ENCODE measurements at regions of chr7 and their contacts with region 1.

Region 1: GRCh38 chr7:17769918-17770317 is 170.4 kb downstream of the SNX13 start:
- DNase-seq: peak; percentile 23
- H3K4me3 Mint-ChIP-seq: no peak overlapping the region
- H3K27ac Mint-ChIP-seq: no peak overlapping the region
- H3K4me1 Mint-ChIP-seq: peaks cover 7% of the 10 kb centered on the region
- H3K27me3 Mint-ChIP-seq: peaks cover 4% of the 10 kb centered on the region

Region 2: GRCh38 chr7:17991866-17992648 is 222.1 kb after region 1 on chr7:
- intact Hi-C with region 1: loop called (anchors 1 kb)
- DNase-seq: no peak
- H3K4me3 Mint-ChIP-seq: no peak overlapping the region
- H3K27ac Mint-ChIP-seq: no peak overlapping the region
- H3K4me1 Mint-ChIP-seq: no peaks in the 10 kb centered on the region
- H3K27me3 Mint-ChIP-seq: peaks cover 3% of the 10 kb centered on the region

Region 3: GRCh38 chr7:18320971-18321567 is 551.2 kb after region 1 on chr7:
- intact Hi-C with region 1: loop called (anchors 1 kb)
- DNase-seq: no peak
- H3K4me3 Mint-ChIP-seq: no peak overlapping the region
- H3K27ac Mint-ChIP-seq: no peak overlapping the region
- H3K4me1 Mint-ChIP-seq: no peaks in the 10 kb centered on the region
- H3K27me3 Mint-ChIP-seq: peaks cover 3% of the 10 kb centered on the region

Region 4: DNA sequence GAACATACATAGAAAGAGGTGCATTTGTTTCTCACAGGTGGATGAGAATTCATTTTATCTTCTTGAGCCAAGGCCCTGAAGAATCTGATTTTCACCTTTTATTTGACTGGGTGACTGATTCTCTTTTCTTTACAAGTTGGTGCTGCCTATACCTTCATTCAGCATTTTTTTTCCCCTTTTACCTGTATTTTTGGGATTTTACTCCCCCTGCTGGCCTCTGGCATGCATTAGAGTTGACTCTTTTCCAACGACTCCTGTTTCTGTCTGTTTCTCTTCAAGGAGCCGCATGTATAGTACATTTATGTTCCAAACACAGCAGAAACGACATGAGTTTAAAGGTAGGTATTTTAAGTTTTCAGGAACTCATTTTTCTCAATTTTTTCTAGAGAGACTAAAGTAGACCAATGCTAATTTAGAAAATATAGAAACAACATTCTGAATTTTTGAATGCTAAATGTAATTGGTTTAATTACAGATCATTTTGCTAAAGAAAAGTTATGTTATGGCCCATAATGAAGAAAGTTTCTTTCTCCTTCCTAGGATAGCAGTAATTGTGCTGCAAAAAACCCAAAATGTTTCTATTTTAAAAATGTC is 575.8 kb after region 1 on chr7:
- intact Hi-C with region 1: loop called (anchors 1 kb)
- DNase-seq: no peak
- H3K4me3 Mint-ChIP-seq: no peak overlapping the region
- H3K27ac Mint-ChIP-seq: no peak overlapping the region
- H3K4me1 Mint-ChIP-seq: no peaks in the 10 kb centered on the region
- H3K27me3 Mint-ChIP-seq: peaks cover 4% of the 10 kb centered on the region